Panc1 (cell line): ENCODE measurements at regions of chr2 and their contacts with region 1.

Region 1: GRCh38 chr2:189848276-189848675 is 64.0 kb downstream of the PMS1 start:
- DNase-seq: no peak
- ATAC-seq: no peak
- H3K4me3 ChIP-seq: no peak overlapping the region
- H3K27ac ChIP-seq: no peak overlapping the region
- H3K4me1 ChIP-seq: peaks cover 6% of the 10 kb centered on the region; the same call in 1 of the 2 replicates
- H3K27me3 ChIP-seq: no peaks in the 10 kb centered on the region
- CTCF ChIP-seq: no peak

Region 2: DNA sequence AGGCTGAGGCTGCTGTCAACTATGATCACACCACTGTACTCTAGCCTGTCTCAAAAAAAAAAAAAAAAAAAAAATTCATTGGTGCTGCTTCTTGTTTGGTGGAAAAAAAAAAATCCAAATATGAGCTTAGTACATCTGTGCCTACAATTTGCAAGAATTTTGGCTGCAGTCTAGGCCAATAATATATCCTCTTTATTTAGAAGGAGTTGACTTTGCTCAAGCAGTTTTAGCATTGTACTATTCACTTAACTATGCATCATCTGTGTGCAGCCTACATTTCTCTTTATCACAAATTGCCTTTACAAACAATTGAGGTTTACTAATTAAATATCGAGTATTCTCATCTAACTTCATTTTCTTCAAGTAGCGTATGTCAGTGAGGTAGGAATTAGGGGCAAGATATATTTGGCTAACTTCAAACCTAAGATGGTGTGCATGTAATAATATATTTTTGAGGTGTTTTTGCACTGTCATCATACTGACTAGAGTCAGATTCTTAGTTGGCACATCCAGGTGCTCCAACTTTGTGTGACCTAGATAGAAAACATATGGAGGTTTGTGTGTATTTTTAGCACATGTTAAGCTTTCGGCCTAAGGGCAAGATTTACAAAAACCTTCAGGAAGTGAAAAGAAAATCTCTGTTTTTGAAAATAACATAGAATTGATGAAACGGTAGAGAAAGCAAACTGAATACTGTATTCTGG is 12.3 kb before region 1 on chr2:
- CTCF ChIA-PET with region 1: no interaction called
- POLR2A ChIA-PET with region 1: interaction called, 16 read pairs
- in situ Hi-C with region 1: no loop called
- intact Hi-C with region 1: no loop called
- DNase-seq: no peak
- ATAC-seq: no peak
- H3K4me3 ChIP-seq: no peak overlapping the region; a peak in 1 of 4 replicates
- H3K27ac ChIP-seq: peak overlapping the region; percentile 83; the same call in 1 of the 2 replicates
- H3K4me1 ChIP-seq: peaks cover 14% of the 10 kb centered on the region
- H3K27me3 ChIP-seq: no peaks in the 10 kb centered on the region
- CTCF ChIP-seq: no peak

Region 3: GRCh38 chr2:190328573-190329147 is 480.4 kb after region 1 on chr2:
- CTCF ChIA-PET with region 1: no interaction called
- POLR2A ChIA-PET with region 1: no interaction called
- in situ Hi-C with region 1: no loop called
- intact Hi-C with region 1: no loop called
- DNase-seq: no peak
- ATAC-seq: no peak
- H3K4me3 ChIP-seq: no peak overlapping the region
- H3K27ac ChIP-seq: no peak overlapping the region
- H3K4me1 ChIP-seq: no peaks in the 10 kb centered on the region
- H3K27me3 ChIP-seq: peaks cover 2% of the 10 kb centered on the region; the same call in 1 of the 2 replicates
- CTCF ChIP-seq: peak; percentile 23; the same call in 1 of the 2 replicates